CD8-positive, alpha-beta T cell (primary cell): ENCODE measurements at regions of chr6 and their contacts with region 1.

Region 1: DNA sequence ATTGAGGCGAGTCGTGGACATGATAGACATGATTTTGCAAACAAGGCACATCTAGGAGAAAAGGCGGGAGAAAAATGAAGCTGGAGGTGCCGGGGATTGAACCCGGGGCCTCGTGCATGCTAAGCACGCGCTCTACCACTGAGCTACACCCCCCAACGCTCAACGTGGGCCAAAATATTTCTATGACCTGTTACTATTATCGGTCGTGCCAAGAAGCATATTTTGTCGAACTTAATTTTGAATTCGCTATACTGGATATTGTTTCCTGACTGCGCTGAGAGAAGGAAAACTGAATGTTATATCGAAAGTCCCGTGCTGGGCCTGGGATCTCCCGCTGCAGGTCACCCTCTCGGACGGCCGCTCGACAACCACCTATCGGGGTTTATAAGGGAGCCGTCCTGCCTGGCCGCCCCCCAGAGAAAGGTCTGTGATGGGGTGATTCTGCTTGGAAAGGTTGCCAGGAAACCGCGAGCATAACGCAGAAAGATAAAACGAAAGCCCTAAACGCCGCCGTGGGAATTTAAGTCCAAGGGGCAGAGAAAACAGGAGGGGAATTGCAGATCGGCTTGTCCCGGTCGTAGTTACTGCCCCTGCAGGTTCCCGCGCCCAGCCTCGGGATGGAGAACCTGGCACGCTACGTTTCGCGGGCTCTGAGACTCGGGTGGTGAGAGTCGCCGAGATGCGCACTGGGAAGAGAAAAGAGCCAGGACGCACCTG is 60.0 kb downstream of the TRIM27 start:
- DNase-seq: peak; percentile 62 to 93 (median 82)
- ATAC-seq: peak; percentile 35
- H3K4me3 ChIP-seq: peak overlapping the region; percentile 80 to 92
- H3K4me3 Mint-ChIP-seq: peak overlapping the region; percentile 96
- H3K27ac ChIP-seq: peak overlapping the region; percentile 44 to 70
- H3K27ac Mint-ChIP-seq: peak overlapping the region; percentile 94
- H3K4me1 ChIP-seq: peaks cover 14% of the 10 kb centered on the region
- H3K4me1 Mint-ChIP-seq: peaks cover 45% of the 10 kb centered on the region
- H3K27me3 ChIP-seq: no peaks in the 10 kb centered on the region
- H3K27me3 Mint-ChIP-seq: no peaks in the 10 kb centered on the region
- CTCF ChIP-seq: no peak

Region 2: GRCh38 chr6:27472617-27473400 is 1391.0 kb before region 1 on chr6 and contains the start of gene ZNF184:
- CTCF ChIA-PET with region 1: no interaction called
- POLR2A ChIA-PET with region 1: interaction called, 4 read pairs
- intact Hi-C with region 1: loop called in 1 of 2 experiments (anchors 10 kb)
- DNase-seq: peak; percentile 71 to 94 (median 84)
- ATAC-seq: peak; percentile 63
- H3K4me3 ChIP-seq: peak within 1 kb of the TSS; percentile 80 to 90
- H3K4me3 Mint-ChIP-seq: peak within 1 kb of the TSS; percentile 96
- H3K27ac ChIP-seq: peak within 1 kb of the TSS; percentile 94 to 96
- H3K27ac Mint-ChIP-seq: peak within 1 kb of the TSS; percentile 96
- H3K4me1 ChIP-seq: peaks cover 26% of the 10 kb centered on the region
- H3K4me1 Mint-ChIP-seq: peaks cover 48% of the 10 kb centered on the region
- H3K27me3 ChIP-seq: no peaks in the 10 kb centered on the region
- H3K27me3 Mint-ChIP-seq: no peaks in the 10 kb centered on the region
- CTCF ChIP-seq: no peak
- total RNA-seq, gene ZNF184: 31.8 to 32.9 TPM

Region 3: DNA sequence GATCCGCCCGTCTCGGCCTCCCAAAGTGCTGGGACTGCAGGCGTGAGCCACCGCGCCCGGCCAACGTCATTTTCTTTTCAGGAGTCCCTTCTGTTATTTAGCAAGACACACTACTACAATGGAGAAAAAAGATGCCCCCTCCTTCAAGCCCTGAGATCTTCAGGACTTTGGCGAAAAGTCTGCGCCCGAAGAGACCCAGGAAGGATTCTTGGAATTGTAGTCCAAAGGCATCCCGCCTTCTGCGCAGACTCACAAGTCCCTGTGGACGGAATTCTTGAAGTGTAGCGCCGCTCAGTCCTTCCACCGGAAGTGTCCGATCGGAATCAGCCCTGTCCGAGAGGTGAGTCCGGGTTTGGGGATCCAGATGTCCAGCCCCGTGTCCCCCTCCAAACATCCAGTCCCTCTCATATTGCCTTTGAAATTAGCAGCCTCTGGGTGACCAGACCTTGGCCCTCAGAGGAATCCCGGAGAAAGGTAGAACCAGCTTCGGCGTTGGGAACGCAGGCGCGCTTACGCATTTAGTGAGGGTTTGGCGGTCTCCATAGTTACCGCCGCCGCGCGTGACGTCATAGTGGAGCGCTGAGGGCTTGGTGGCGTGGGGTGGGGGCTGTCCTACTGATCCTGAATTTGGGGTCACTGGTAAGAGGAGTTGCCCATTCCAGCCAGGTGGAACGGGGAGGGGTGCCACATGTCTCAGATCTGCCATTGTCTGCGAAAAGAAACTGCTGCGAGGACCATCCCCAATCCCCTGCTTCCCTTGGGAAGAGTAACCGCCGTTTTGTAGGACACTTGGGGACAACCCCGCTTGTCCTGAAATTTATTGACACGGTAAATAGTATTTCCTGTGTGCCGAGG is 782.9 kb before region 1 on chr6:
- CTCF ChIA-PET with region 1: no interaction called
- POLR2A ChIA-PET with region 1: no interaction called
- intact Hi-C with region 1: loop called in 1 of 2 experiments (anchors 10 kb)
- DNase-seq: peak; percentile 86 to 96 (median 94)
- ATAC-seq: peak; percentile 74
- H3K4me3 ChIP-seq: peak overlapping the region; percentile 69 to 93
- H3K4me3 Mint-ChIP-seq: peak overlapping the region; percentile 98
- H3K27ac ChIP-seq: peak overlapping the region; percentile 91 to 96
- H3K27ac Mint-ChIP-seq: peak overlapping the region; percentile 99
- H3K4me1 ChIP-seq: peaks cover 13% of the 10 kb centered on the region
- H3K4me1 Mint-ChIP-seq: peaks cover 21% of the 10 kb centered on the region
- H3K27me3 ChIP-seq: no peaks in the 10 kb centered on the region
- H3K27me3 Mint-ChIP-seq: no peaks in the 10 kb centered on the region
- CTCF ChIP-seq: no peak

Region 4: DNA sequence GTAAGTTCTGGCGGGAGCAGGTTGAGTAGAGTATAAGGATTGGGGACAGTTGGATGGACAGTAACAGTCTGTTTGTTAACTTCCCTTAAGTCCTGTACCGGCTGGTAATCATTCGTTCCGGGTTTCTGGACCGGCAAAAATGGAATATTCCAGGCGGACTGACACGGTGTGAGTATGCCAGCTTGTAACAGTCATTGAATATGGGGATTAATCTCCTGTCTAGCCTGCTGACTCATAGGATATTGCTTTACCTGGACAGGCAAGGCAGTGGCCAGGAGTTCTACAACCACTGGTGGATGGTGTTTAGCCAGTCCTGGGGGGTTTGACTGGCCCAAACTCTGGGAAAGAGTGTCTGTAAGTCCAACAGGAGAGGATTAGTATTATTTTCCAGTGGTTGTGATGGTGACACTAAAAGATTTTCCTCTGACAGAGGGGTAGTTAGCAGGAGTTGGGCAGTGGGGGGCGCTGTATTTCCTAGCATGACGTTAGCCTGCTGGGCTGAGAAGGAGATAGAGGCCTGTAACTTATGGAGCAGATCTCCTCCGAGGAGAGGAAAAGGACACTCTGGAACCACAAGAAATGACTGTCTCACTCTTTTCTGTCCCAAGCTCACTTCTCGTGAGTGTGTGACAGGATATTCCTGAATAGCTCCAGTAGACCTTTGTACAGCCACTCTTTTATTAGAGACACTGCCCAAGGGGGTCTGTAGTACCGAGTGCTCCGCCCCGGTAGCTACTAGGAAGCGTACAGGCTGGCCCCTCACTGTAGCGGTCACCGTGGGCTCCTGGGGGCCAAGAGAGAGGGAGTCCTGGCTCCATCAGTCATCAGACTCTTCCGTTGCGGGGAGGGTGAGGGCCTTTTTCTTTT is 92.1 kb before region 1 on chr6:
- CTCF ChIA-PET with region 1: no interaction called
- POLR2A ChIA-PET with region 1: no interaction called
- intact Hi-C with region 1: no loop called
- DNase-seq: no peak
- ATAC-seq: no peak
- H3K4me3 ChIP-seq: no peak overlapping the region
- H3K4me3 Mint-ChIP-seq: no peak overlapping the region
- H3K27ac ChIP-seq: no peak overlapping the region
- H3K27ac Mint-ChIP-seq: no peak overlapping the region
- H3K4me1 ChIP-seq: no peaks in the 10 kb centered on the region
- H3K4me1 Mint-ChIP-seq: peaks cover 6% of the 10 kb centered on the region
- H3K27me3 ChIP-seq: peaks cover 49 to 68% of the 10 kb centered on the region in 2 experiments
- H3K27me3 Mint-ChIP-seq: peaks cover 94% of the 10 kb centered on the region
- CTCF ChIP-seq: no peak

Region 5: GRCh38 chr6:28895134-28895812 is 31.5 kb after region 1 on chr6:
- CTCF ChIA-PET with region 1: interaction called, 8 read pairs
- POLR2A ChIA-PET with region 1: interaction called, 54 read pairs
- intact Hi-C with region 1: loop called (anchors 1 kb)
- DNase-seq: peak; percentile 83 to 97 (median 90)
- ATAC-seq: peak; percentile 68
- H3K4me3 ChIP-seq: peak overlapping the region; percentile 79 to 80
- H3K4me3 Mint-ChIP-seq: peak overlapping the region; percentile 98
- H3K27ac ChIP-seq: peak overlapping the region; percentile 95 to 98
- H3K27ac Mint-ChIP-seq: peak overlapping the region; percentile 99
- H3K4me1 ChIP-seq: peaks cover 8% of the 10 kb centered on the region
- H3K4me1 Mint-ChIP-seq: peaks cover 18% of the 10 kb centered on the region
- H3K27me3 ChIP-seq: no peaks in the 10 kb centered on the region
- H3K27me3 Mint-ChIP-seq: no peaks in the 10 kb centered on the region
- CTCF ChIP-seq: no peak

Region 6: GRCh38 chr6:28940858-28941680 is 77.3 kb after region 1 on chr6:
- CTCF ChIA-PET with region 1: interaction called, 13 read pairs
- POLR2A ChIA-PET with region 1: interaction called, 9 read pairs
- intact Hi-C with region 1: loop called (anchors 1 kb)
- DNase-seq: peak in 8 of 9 experiments; percentile 58 to 92 (median 70)
- ATAC-seq: peak; percentile 70
- H3K4me3 ChIP-seq: peak overlapping the region; percentile 66 to 81
- H3K4me3 Mint-ChIP-seq: peak overlapping the region; percentile 91
- H3K27ac ChIP-seq: peak overlapping the region; percentile 70 to 79
- H3K27ac Mint-ChIP-seq: peak overlapping the region; percentile 96
- H3K4me1 ChIP-seq: peaks cover 40% of the 10 kb centered on the region
- H3K4me1 Mint-ChIP-seq: peaks cover 46% of the 10 kb centered on the region
- H3K27me3 ChIP-seq: no peaks in the 10 kb centered on the region
- H3K27me3 Mint-ChIP-seq: no peaks in the 10 kb centered on the region
- CTCF ChIP-seq: no peak

Region 7: GRCh38 chr6:30326526-30327260 is 1462.9 kb after region 1 on chr6 and contains the start of gene TRIM39:
- CTCF ChIA-PET with region 1: no interaction called
- POLR2A ChIA-PET with region 1: no interaction called
- intact Hi-C with region 1: loop called in 1 of 2 experiments (anchors 5 kb)
- DNase-seq: peak; percentile 75 to 97 (median 90)
- ATAC-seq: peak; percentile 58
- H3K4me3 ChIP-seq: peak within 1 kb of the TSS; percentile 74 to 87
- H3K4me3 Mint-ChIP-seq: peak within 1 kb of the TSS; percentile 96
- H3K27ac ChIP-seq: peak within 1 kb of the TSS; percentile 95 to 99
- H3K27ac Mint-ChIP-seq: peak within 1 kb of the TSS; percentile 98
- H3K4me1 ChIP-seq: peaks cover 41% of the 10 kb centered on the region
- H3K4me1 Mint-ChIP-seq: peaks cover 59% of the 10 kb centered on the region
- H3K27me3 ChIP-seq: no peaks in the 10 kb centered on the region
- H3K27me3 Mint-ChIP-seq: no peaks in the 10 kb centered on the region
- CTCF ChIP-seq: no peak
- total RNA-seq, gene TRIM39: 50.7 to 58.5 TPM